ENCODE measurements at regions of chr10 and their contacts with region 1.

Region 1: DNA sequence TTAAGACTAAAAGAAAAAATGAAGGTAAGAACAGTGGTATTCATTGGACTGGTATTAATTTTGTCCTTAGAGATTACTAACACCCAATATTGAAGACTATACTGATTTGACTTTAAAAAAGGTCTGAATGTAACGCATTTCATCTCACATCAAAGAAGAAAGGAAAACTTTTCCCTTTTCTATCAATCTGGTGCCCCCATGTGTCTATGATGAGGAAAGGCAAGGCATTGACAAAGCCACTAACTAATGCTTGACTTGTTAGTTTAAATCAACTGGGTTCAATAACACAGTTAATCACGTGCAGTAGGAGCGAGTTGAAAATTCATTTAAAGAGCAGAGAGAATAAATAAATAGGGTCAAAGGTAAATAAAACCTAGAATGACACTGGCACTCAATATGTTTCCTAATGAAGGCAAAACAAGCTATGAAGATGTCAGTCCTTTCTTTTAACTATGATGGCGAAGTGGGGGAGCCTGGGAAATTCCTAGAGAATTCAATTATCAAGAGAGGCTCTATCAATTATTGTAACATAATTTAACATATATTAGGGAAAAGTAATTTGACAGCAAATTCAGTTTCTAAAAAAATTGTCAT is 180.9 kb downstream of the ANK3 start:
- DNase-seq: peak; percentile 49
- ATAC-seq: peak; percentile 59
- H3K4me3 ChIP-seq: no peak overlapping the region
- H3K27ac ChIP-seq: no peak overlapping the region
- H3K4me1 ChIP-seq: no peaks in the 10 kb centered on the region
- H3K27me3 ChIP-seq: peaks cover 15% of the 10 kb centered on the region
- CTCF ChIP-seq: peak; percentile 83
- POLR2A ChIP-seq: no peak
- RAD21 ChIP-seq: peak; percentile 80

Region 2: DNA sequence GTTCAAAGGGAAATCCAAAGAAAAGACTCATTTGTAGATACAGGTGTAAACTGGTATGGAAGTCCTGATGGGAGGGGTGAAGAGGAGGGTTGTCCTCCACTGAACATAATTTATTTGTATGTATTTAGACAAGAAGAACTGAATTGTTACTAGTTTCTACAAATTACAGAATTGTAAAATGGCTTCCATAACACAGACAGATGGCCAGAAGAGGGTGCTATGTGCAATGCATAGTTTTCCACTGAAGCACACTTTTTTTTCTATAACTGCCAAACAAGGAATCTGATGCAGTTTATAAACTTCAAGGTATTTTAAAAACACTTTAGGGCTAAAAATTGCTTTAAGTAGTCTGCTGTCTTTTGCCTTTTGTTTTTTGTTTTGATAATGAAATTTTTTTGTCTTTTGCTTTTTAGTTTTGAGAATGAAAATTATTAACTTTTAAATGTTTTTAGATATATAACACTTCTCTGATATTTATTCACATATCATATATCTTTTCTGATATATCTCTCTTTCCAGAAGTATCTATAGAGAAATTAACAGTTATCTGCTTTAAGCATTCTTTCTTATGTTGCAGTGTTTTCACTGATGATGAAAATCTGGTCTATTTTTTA is 973.9 kb before region 1 on chr10:
- CTCF ChIA-PET with region 1: no interaction called
- POLR2A ChIA-PET with region 1: no interaction called
- dilution Hi-C with region 1: no loop called
- in situ Hi-C with region 1: no loop called
- intact Hi-C with region 1: loop called (anchors 10 kb)
- DNase-seq: peak; percentile 58
- ATAC-seq: peak; percentile 61; the same call in 1 of the 2 replicates
- H3K4me3 ChIP-seq: no peak overlapping the region
- H3K27ac ChIP-seq: no peak overlapping the region
- H3K4me1 ChIP-seq: no peaks in the 10 kb centered on the region
- H3K27me3 ChIP-seq: no peaks in the 10 kb centered on the region
- CTCF ChIP-seq: peak; percentile 62
- POLR2A ChIP-seq: no peak
- RAD21 ChIP-seq: peak; percentile 47

Region 3: GRCh38 chr10:60003651-60004523 is 204.9 kb before region 1 on chr10:
- CTCF ChIA-PET with region 1: no interaction called
- POLR2A ChIA-PET with region 1: no interaction called
- dilution Hi-C with region 1: no loop called
- in situ Hi-C with region 1: no loop called
- intact Hi-C with region 1: no loop called
- DNase-seq: no peak
- ATAC-seq: no peak
- H3K4me3 ChIP-seq: no peak overlapping the region
- H3K27ac ChIP-seq: no peak overlapping the region
- H3K4me1 ChIP-seq: no peaks in the 10 kb centered on the region
- H3K27me3 ChIP-seq: no peaks in the 10 kb centered on the region
- CTCF ChIP-seq: no peak
- POLR2A ChIP-seq: no peak
- RAD21 ChIP-seq: no peak

Region 4: DNA sequence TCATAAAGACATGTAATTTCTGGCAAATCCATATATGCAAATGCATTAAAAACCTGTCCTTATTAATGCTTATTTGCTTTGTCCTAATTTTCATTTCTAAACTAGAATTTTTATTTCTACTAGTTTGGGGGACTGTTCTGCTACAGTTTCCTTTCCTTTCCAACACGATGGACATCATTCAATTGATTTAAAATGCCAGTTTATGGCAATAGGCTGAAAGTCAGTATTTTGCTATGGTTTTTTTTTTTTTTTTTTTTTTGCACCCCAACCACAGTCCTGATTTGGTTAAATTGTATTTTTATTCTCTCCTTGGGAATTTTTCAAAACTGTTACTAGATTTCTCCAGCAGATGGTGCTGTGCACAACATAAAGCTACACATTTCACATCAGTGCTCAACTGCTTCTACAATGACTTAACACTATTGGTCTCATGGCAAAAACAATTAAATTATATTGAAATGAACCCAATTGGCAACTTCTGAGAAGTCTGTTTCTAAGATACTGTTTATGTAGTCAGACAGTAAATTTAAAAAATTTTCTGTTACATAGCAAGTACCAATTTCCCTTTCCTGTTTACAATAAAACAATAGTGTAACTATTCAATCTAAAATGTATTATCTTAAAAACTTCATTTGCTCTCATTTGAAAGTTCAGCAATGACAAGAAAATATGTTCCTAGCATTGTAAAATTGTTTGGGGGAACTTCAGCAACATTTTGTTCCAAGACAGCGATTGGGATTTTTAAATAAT is 108.6 kb before region 1 on chr10:
- CTCF ChIA-PET with region 1: interaction called, 4 read pairs
- POLR2A ChIA-PET with region 1: no interaction called
- dilution Hi-C with region 1: no loop called
- in situ Hi-C with region 1: loop called (anchors 5 kb)
- intact Hi-C with region 1: loop called (anchors 1 kb)
- DNase-seq: peak; percentile 63
- ATAC-seq: peak; percentile 63
- H3K4me3 ChIP-seq: no peak overlapping the region
- H3K27ac ChIP-seq: no peak overlapping the region
- H3K4me1 ChIP-seq: peaks cover 1% of the 10 kb centered on the region; the same call in 1 of the 2 replicates
- H3K27me3 ChIP-seq: peaks cover 1% of the 10 kb centered on the region; the same call in 1 of the 2 replicates
- CTCF ChIP-seq: peak; percentile 69
- POLR2A ChIP-seq: no peak
- RAD21 ChIP-seq: peak; percentile 73

Region 5: GRCh38 chr10:60114765-60115586 is 93.8 kb before region 1 on chr10:
- CTCF ChIA-PET with region 1: interaction called, 32 read pairs
- POLR2A ChIA-PET with region 1: no interaction called
- dilution Hi-C with region 1: no loop called
- in situ Hi-C with region 1: no loop called
- intact Hi-C with region 1: loop called (anchors 1 kb)
- DNase-seq: peak; percentile 69
- ATAC-seq: peak; percentile 70
- H3K4me3 ChIP-seq: no peak overlapping the region
- H3K27ac ChIP-seq: no peak overlapping the region
- H3K4me1 ChIP-seq: no peaks in the 10 kb centered on the region
- H3K27me3 ChIP-seq: no peaks in the 10 kb centered on the region; the same call in 1 of the 2 replicates
- CTCF ChIP-seq: peak; percentile 57
- POLR2A ChIP-seq: no peak
- RAD21 ChIP-seq: peak; percentile 64

Region 6: DNA sequence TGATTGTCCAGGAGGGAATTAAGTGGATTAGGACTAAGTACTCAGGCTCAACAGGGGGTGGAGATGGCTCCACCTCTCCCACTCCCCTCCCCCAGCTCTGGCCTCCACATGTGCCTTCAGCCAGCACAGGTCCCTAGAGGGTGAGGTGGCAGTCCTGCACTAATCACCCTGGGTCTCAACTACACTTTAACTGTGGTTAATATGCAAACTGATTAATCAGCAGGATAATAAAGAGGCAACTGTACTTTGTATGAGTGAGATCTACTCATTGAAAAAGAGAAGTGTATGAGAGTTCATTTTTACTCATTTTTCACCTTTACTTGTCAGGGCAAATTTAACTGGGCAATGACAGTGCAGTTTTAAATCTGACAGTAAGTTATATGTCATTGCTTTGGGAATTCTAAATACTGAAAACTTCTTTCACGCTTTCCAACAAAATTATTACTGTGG is 78.6 kb before region 1 on chr10:
- CTCF ChIA-PET with region 1: no interaction called
- POLR2A ChIA-PET with region 1: no interaction called
- dilution Hi-C with region 1: no loop called
- in situ Hi-C with region 1: no loop called
- intact Hi-C with region 1: no loop called
- DNase-seq: no peak
- ATAC-seq: no peak
- H3K4me3 ChIP-seq: no peak overlapping the region
- H3K27ac ChIP-seq: no peak overlapping the region
- H3K4me1 ChIP-seq: no peaks in the 10 kb centered on the region
- H3K27me3 ChIP-seq: peaks cover 3% of the 10 kb centered on the region
- CTCF ChIP-seq: no peak
- POLR2A ChIP-seq: no peak
- RAD21 ChIP-seq: no peak

Region 7: GRCh38 chr10:60291344-60291930 is 82.7 kb after region 1 on chr10:
- CTCF ChIA-PET with region 1: no interaction called
- POLR2A ChIA-PET with region 1: no interaction called
- dilution Hi-C with region 1: no loop called
- in situ Hi-C with region 1: no loop called
- intact Hi-C with region 1: no loop called
- DNase-seq: no peak
- ATAC-seq: no peak
- H3K4me3 ChIP-seq: no peak overlapping the region
- H3K27ac ChIP-seq: no peak overlapping the region
- H3K4me1 ChIP-seq: 0 out of 2 replicates have a peak, but pooled peaks cover 2% of the 10 kb centered on the region
- H3K27me3 ChIP-seq: no peaks in the 10 kb centered on the region
- CTCF ChIP-seq: no peak
- POLR2A ChIP-seq: no peak
- RAD21 ChIP-seq: no peak